H1 (cell line): ENCODE measurements at regions of chr5 and their contacts with region 1.

Region 1: GRCh38 chr5:81408496-81408895 is 14.6 kb upstream of the ACOT12 start:
- DNase-seq: no peak
- H3K4me3 ChIP-seq: no peak overlapping the region
- H3K27ac ChIP-seq: no peak overlapping the region
- H3K4me1 ChIP-seq: no peaks in the 10 kb centered on the region
- H3K27me3 ChIP-seq: peaks cover 0 to 1% (median 0%) of the 10 kb centered on the region in 4 experiments; a peak in 1 of 7 replicates
- CTCF ChIP-seq: no peak
- EP300 ChIP-seq: no peak
- POLR2A ChIP-seq: no peak
- RAD21 ChIP-seq: no peak

Region 2: DNA sequence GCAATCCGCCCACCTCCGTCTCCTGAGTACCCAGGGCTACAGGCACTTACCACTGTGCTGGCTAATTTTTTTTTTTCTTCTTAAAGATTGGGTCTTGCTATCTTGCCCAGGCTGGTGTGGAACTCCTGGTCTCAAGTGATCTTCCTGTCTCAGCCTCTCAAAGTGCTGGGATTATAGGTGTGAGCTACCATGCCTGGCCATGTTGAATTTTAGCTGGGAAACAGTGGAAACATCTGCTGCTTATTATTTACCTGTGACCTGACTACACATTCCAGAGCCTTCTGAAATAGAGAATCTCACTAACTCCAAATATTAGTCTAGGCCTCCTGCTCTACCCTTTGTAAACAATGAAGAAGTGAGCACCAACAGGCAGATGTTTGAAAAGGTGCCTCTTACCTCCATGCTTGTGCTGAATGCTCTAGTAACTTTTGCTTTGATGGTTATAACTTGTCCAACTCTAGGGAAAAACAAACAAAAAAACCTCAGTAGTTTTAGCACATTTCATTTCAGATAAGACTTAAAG is 37.1 kb before region 1 on chr5:
- CTCF ChIA-PET with region 1: no interaction called
- POLR2A ChIA-PET with region 1: no interaction called
- DNase-seq: no peak
- H3K4me3 ChIP-seq: no peak overlapping the region
- H3K27ac ChIP-seq: no peak overlapping the region
- H3K4me1 ChIP-seq: no peaks in the 10 kb centered on the region
- H3K27me3 ChIP-seq: no peaks in the 10 kb centered on the region
- CTCF ChIP-seq: no peak
- EP300 ChIP-seq: no peak
- POLR2A ChIP-seq: no peak
- RAD21 ChIP-seq: no peak

Region 3: GRCh38 chr5:81425569-81425968 is 17.1 kb after region 1 on chr5:
- CTCF ChIA-PET with region 1: interaction called, 11 read pairs
- POLR2A ChIA-PET with region 1: no interaction called
- DNase-seq: no peak
- H3K4me3 ChIP-seq: no peak overlapping the region
- H3K27ac ChIP-seq: no peak overlapping the region
- H3K4me1 ChIP-seq: no peaks in the 10 kb centered on the region
- H3K27me3 ChIP-seq: no peaks in the 10 kb centered on the region
- CTCF ChIP-seq: peak in 2 of 3 experiments; percentile 13 to 27; a peak in 2 of 4 replicates
- EP300 ChIP-seq: no peak
- POLR2A ChIP-seq: no peak
- RAD21 ChIP-seq: peak; percentile 53 to 61

Region 4: GRCh38 chr5:81482595-81482994 is 74.1 kb after region 1 on chr5:
- CTCF ChIA-PET with region 1: no interaction called
- POLR2A ChIA-PET with region 1: no interaction called
- DNase-seq: no peak
- H3K4me3 ChIP-seq: no peak overlapping the region
- H3K27ac ChIP-seq: no peak overlapping the region
- H3K4me1 ChIP-seq: no peaks in the 10 kb centered on the region
- H3K27me3 ChIP-seq: no peaks in the 10 kb centered on the region
- CTCF ChIP-seq: no peak
- EP300 ChIP-seq: no peak
- POLR2A ChIP-seq: no peak
- RAD21 ChIP-seq: no peak